ENCODE measurements at regions of chr1 and their contacts with region 1.

Region 1: GRCh38 chr1:65687428-65688214 is 105.1 kb upstream of the PDE4B start:
- DNase-seq: peak; percentile 16
- ATAC-seq: peak; percentile 95
- H3K4me3 ChIP-seq: no peak overlapping the region
- H3K27ac ChIP-seq: no peak overlapping the region
- H3K4me1 ChIP-seq: no peaks in the 10 kb centered on the region
- H3K27me3 ChIP-seq: 0 out of 4 replicates have a peak, but pooled peaks cover 0 to 4% of the 10 kb centered on the region in 2 experiments
- CTCF ChIP-seq: peak; percentile 84 to 87 (median 86)
- EP300 ChIP-seq: no peak
- POLR2A ChIP-seq: no peak
- RAD21 ChIP-seq: peak; percentile 100

Region 2: GRCh38 chr1:65059930-65060538 is 627.6 kb before region 1 on chr1:
- CTCF ChIA-PET with region 1: interaction called, 34 read pairs
- POLR2A ChIA-PET with region 1: no interaction called
- RAD21 ChIA-PET with region 1: interaction called, 5 read pairs
- SMC1A ChIA-PET with region 1: interaction called, 16 read pairs
- in situ Hi-C with region 1: loop called (anchors 5 kb)
- intact Hi-C with region 1: loop called (anchors 2 kb)
- DNase-seq: no peak
- ATAC-seq: peak; percentile 46; the same call in 1 of the 3 replicates
- H3K4me3 ChIP-seq: no peak overlapping the region
- H3K27ac ChIP-seq: no peak overlapping the region
- H3K4me1 ChIP-seq: no peaks in the 10 kb centered on the region
- H3K27me3 ChIP-seq: no peaks in the 10 kb centered on the region
- CTCF ChIP-seq: peak; percentile 41 to 59 (median 48); a peak in 5 of 6 replicates
- EP300 ChIP-seq: no peak
- POLR2A ChIP-seq: no peak
- RAD21 ChIP-seq: peak; percentile 71

Region 3: DNA sequence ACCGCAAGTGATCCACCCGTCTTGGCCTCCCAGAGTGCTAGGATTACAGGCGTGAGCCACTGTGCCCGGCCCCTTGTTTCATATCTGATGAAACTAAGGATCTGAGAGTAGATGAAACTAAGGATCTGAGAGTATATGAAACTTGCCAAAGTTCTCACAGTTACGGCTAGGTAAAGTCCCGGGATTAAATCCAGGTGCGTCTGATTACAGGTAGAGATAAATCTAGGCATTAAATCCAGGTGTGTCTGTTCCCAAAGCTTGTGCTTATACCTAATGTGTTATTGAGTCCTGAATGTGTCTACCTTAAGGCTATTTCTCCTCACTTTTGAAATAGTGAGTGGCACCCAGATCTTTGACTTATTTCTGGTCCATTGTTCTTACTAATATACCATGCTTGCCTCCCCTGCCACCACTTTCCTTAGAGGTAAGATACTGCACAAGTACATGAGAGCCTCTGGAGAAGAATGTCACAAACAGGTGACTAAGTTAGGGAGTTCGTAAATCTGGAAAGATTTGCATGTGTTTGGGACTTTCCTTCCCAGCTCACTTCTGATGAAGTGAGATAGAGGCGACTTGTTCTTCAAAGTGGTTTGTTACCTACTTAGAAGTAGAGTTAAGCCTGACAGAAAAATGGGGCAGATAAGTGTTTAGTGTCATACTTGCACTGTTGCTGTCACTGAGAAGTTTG is 473.1 kb before region 1 on chr1:
- CTCF ChIA-PET with region 1: interaction called, 18 read pairs
- POLR2A ChIA-PET with region 1: no interaction called
- RAD21 ChIA-PET with region 1: interaction called, 9 read pairs
- SMC1A ChIA-PET with region 1: interaction called, 4 read pairs
- in situ Hi-C with region 1: no loop called
- intact Hi-C with region 1: loop called (anchors 5 kb)
- DNase-seq: no peak
- ATAC-seq: no peak; the same call in 2 of the 3 replicates
- H3K4me3 ChIP-seq: no peak overlapping the region
- H3K27ac ChIP-seq: no peak overlapping the region
- H3K4me1 ChIP-seq: peaks cover 15% of the 10 kb centered on the region
- H3K27me3 ChIP-seq: no peaks in the 10 kb centered on the region
- CTCF ChIP-seq: no peak
- EP300 ChIP-seq: no peak
- POLR2A ChIP-seq: no peak
- RAD21 ChIP-seq: no peak

Region 4: DNA sequence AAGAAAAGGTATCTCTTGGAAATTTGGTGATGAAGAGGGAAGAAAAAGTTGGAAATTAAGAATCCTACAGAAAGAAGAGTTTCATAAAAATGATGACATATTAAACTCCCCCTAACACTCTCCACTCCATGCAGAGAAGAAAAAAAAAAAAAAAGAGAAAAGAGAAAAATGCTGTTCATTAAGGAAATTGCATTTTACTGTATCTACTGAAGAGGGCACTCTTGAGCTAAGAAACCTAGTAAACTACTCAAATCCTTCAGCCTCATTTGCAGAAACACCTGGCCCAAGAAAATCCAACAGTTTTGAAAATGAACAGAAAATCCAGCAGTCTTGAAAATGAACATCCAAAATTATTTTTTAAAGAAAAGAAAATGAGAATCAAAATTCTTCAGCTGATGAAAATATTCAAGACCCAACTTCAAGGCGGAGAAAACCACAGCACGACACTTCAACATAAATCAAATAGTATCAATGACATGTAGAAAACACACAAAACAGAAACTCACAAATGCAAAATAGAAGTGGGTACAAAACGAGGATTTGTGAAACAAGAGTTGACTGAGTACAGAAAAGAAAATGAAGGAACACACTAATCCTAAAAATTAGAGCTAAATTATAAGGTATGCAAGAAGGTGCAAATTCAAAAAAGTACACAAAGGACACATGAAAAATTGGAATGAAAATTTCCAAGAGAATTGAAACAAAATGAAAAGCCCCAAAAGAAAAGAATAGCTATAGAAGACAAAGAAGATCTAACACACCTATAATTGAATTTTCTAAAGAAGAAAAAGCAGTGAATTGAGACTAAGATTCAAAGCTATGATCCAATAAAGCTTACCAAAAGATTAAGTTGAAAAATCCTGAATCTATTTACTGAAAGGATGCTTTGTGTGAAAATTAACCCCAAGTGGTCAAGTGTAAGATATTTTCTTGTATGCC is 451.5 kb before region 1 on chr1:
- CTCF ChIA-PET with region 1: interaction called, 61 read pairs
- POLR2A ChIA-PET with region 1: no interaction called
- RAD21 ChIA-PET with region 1: interaction called, 14 read pairs
- SMC1A ChIA-PET with region 1: interaction called, 21 read pairs
- in situ Hi-C with region 1: loop called (anchors 5 kb)
- intact Hi-C with region 1: loop called (anchors 1 kb)
- DNase-seq: no peak
- ATAC-seq: peak; percentile 41
- H3K4me3 ChIP-seq: no peak overlapping the region
- H3K27ac ChIP-seq: no peak overlapping the region
- H3K4me1 ChIP-seq: no peaks in the 10 kb centered on the region
- H3K27me3 ChIP-seq: no peaks in the 10 kb centered on the region
- CTCF ChIP-seq: peak; percentile 41 to 63 (median 56); a peak in 5 of 6 replicates
- EP300 ChIP-seq: no peak
- POLR2A ChIP-seq: no peak
- RAD21 ChIP-seq: peak; percentile 72

Region 5: DNA sequence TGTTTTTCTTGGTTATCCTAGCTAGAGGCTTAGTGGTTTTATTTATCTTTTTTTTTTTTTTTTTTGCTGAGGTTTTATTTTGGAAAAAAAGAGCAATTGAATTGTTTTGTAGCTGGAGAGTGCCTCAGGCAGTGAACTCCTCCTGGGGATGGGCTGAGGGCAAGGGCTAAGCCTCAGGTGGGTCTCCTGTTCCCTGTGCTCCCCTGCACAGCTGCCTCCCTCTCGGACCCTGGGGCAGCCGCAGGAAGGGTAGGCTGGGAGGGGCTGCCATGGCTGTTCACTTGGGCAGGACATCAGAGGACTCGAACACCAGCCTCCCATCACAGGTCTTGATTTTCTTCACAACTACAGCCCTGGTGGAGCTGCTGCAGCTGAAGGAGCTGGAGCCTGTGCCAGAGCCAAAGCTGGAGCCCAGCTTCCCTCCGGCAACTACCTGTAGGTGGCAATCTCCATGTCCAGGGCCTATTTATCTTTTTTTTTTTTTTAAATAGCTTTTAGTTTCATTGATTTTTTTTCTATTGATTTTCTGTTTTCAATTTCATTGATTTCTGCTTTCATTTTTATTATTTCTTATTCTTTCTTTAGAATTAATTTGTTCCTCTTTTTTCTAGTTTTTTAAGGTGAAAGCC is 238.3 kb before region 1 on chr1:
- CTCF ChIA-PET with region 1: no interaction called
- POLR2A ChIA-PET with region 1: no interaction called
- RAD21 ChIA-PET with region 1: no interaction called
- SMC1A ChIA-PET with region 1: no interaction called
- in situ Hi-C with region 1: no loop called
- intact Hi-C with region 1: no loop called
- DNase-seq: no peak
- ATAC-seq: no peak
- H3K4me3 ChIP-seq: no peak overlapping the region
- H3K27ac ChIP-seq: no peak overlapping the region
- H3K4me1 ChIP-seq: no peaks in the 10 kb centered on the region
- H3K27me3 ChIP-seq: no peaks in the 10 kb centered on the region
- CTCF ChIP-seq: no peak
- EP300 ChIP-seq: no peak
- POLR2A ChIP-seq: no peak
- RAD21 ChIP-seq: no peak

Region 6: GRCh38 chr1:65698590-65698989 is 11.0 kb after region 1 on chr1:
- CTCF ChIA-PET with region 1: interaction called, 19 read pairs
- POLR2A ChIA-PET with region 1: no interaction called
- RAD21 ChIA-PET with region 1: no interaction called
- SMC1A ChIA-PET with region 1: interaction called, 3 read pairs
- in situ Hi-C with region 1: no loop called
- intact Hi-C with region 1: no loop called
- DNase-seq: no peak
- ATAC-seq: no peak
- H3K4me3 ChIP-seq: no peak overlapping the region
- H3K27ac ChIP-seq: no peak overlapping the region
- H3K4me1 ChIP-seq: no peaks in the 10 kb centered on the region
- H3K27me3 ChIP-seq: no peaks in the 10 kb centered on the region; a peak in 1 of 4 replicates
- CTCF ChIP-seq: no peak
- EP300 ChIP-seq: no peak
- POLR2A ChIP-seq: no peak
- RAD21 ChIP-seq: no peak

Region 7: DNA sequence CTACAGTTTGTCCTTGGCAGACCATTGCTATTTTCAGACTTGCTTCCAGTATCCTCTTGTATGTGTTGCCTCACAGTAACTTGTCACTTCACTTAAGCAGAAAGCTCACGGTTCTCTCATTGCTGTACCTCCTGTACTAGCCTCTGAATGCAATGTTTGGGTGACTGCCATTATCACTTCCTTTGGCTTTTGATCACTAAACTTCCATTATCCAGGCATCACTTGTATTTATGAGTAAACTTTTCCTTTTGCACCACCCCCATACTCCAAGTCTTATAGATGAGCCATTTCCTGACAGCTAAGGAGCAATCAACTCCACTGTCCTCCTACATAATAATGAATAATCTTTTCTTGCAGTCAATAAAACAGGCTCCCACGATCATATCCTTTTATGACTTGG is 360.4 kb after region 1 on chr1:
- CTCF ChIA-PET with region 1: no interaction called
- POLR2A ChIA-PET with region 1: no interaction called
- RAD21 ChIA-PET with region 1: no interaction called
- SMC1A ChIA-PET with region 1: no interaction called
- in situ Hi-C with region 1: no loop called
- intact Hi-C with region 1: no loop called
- DNase-seq: no peak
- ATAC-seq: no peak
- H3K4me3 ChIP-seq: no peak overlapping the region
- H3K27ac ChIP-seq: no peak overlapping the region
- H3K4me1 ChIP-seq: no peaks in the 10 kb centered on the region
- H3K27me3 ChIP-seq: no peaks in the 10 kb centered on the region
- CTCF ChIP-seq: no peak
- EP300 ChIP-seq: no peak
- POLR2A ChIP-seq: no peak
- RAD21 ChIP-seq: no peak

Measured in GM12878 (cell line).